WTC11 (cell line): ENCODE measurements at regions of chr9 and their contacts with region 1.

Region 1: GRCh38 chr9:68416936-68417564 is 60.6 kb downstream of the PGM5 start:
- DNase-seq: peak; percentile 16
- ATAC-seq: peak; percentile 86
- H3K4me3 Mint-ChIP-seq: no peak overlapping the region
- H3K27ac Mint-ChIP-seq: no peak overlapping the region
- H3K4me1 Mint-ChIP-seq: peaks cover 4% of the 10 kb centered on the region; the same call in 1 of the 2 replicates
- H3K27me3 Mint-ChIP-seq: peaks cover 10% of the 10 kb centered on the region
- CTCF ChIP-seq: no peak

Region 2: GRCh38 chr9:68446836-68447235 is 29.8 kb after region 1 on chr9:
- CTCF ChIA-PET with region 1: interaction called, 19 read pairs
- POLR2A ChIA-PET with region 1: no interaction called
- DNase-seq: no peak
- ATAC-seq: no peak
- H3K4me3 Mint-ChIP-seq: no peak overlapping the region
- H3K27ac Mint-ChIP-seq: no peak overlapping the region
- H3K4me1 Mint-ChIP-seq: no peaks in the 10 kb centered on the region
- H3K27me3 Mint-ChIP-seq: peaks cover 67% of the 10 kb centered on the region
- CTCF ChIP-seq: no peak

Region 3: DNA sequence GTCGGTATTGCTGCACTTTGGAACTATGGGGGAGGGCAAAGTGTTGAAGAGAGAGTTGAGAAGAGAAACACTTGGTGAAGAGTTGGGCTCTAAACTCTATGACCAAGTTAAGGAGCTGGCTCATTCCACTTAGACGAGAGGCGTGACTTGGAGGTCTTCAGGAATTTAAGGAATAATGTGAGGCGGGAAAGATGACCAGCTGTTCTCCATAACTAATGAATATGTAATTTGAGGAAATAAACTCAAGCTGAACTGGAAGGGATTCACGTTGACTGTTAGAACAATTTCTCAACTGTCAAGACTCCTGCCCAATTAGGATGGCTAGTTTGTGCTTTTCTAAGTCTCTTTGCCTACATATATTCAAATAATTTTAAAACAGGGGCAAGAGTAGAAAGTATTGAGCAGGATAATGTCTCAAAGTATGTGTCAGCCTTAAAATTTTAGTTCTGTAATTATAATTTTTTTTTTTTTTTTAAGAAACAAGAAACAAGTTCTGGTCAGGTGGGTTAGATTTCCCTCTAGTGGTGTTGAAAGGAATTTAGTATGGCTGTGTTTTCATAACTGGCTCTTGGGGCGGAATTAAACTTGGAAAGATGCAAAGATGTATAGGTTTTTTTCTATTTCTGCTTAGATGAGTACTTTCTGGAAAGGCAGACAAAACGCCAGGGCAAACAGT is 90.2 kb after region 1 on chr9:
- CTCF ChIA-PET with region 1: interaction called, 10 read pairs
- POLR2A ChIA-PET with region 1: no interaction called
- DNase-seq: no peak
- ATAC-seq: no peak
- H3K4me3 Mint-ChIP-seq: no peak overlapping the region
- H3K27ac Mint-ChIP-seq: no peak overlapping the region
- H3K4me1 Mint-ChIP-seq: peaks cover 5% of the 10 kb centered on the region
- H3K27me3 Mint-ChIP-seq: peaks cover 100% of the 10 kb centered on the region
- CTCF ChIP-seq: peak; percentile 45; the same call in 1 of the 2 replicates

Region 4: DNA sequence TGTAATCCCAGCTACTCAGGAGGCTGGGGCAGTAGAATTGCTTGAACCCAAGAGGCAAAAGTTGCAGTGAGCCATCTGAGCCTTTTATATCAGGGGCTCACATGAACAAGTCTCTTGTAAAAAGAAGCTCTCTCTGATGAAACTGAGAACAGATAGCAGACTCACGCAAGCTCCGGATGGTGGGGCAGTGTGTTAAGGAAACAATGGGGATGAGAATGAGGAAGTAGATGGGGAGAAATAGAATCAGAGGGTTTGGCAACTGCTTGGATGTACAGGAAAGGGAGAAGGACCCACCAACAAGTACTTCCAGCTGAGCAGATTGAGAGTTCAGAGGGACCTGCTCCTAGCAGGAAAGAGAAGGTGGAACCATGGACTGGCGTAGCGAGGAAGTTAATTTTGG is 105.1 kb after region 1 on chr9:
- CTCF ChIA-PET with region 1: no interaction called
- POLR2A ChIA-PET with region 1: no interaction called
- DNase-seq: no peak
- ATAC-seq: no peak
- H3K4me3 Mint-ChIP-seq: no peak overlapping the region
- H3K27ac Mint-ChIP-seq: no peak overlapping the region
- H3K4me1 Mint-ChIP-seq: no peaks in the 10 kb centered on the region
- H3K27me3 Mint-ChIP-seq: peaks cover 67% of the 10 kb centered on the region
- CTCF ChIP-seq: no peak

Region 5: DNA sequence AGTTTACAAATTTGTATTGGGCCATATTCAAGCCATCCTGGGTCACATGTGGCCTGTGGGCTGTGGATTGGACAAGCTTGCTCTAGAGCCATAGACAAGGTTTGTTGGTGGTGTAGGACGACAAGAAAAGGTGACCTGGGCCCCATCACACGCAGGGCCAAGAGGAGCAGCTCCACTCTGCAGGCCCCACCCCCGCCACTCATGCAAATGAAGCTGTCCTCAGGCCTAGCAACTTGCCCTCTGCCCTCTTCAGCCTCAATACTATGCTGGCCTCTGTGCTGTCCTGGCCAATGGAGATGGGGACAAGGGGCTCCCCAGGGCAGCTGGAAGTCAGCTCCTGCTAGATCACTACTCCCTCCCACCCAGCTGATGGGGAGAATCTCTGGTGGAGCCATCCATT is 178.8 kb after region 1 on chr9:
- CTCF ChIA-PET with region 1: no interaction called
- POLR2A ChIA-PET with region 1: no interaction called
- DNase-seq: no peak
- ATAC-seq: peak; percentile 65
- H3K4me3 Mint-ChIP-seq: no peak overlapping the region
- H3K27ac Mint-ChIP-seq: no peak overlapping the region
- H3K4me1 Mint-ChIP-seq: peaks cover 13% of the 10 kb centered on the region; the same call in 1 of the 2 replicates
- H3K27me3 Mint-ChIP-seq: no peaks in the 10 kb centered on the region; the same call in 1 of the 2 replicates
- CTCF ChIP-seq: no peak